Right ventricle myocardium inferior (tissue), 1 donor: ENCODE measurements at regions of chr3 and their contacts with region 1.

Region 1: GRCh38 chr3:133927540-133928066 is 31.9 kb upstream of the RAB6B start:
- DNase-seq: no peak
- ATAC-seq: peak; percentile 87

Region 2: GRCh38 chr3:133610031-133610430 is 317.6 kb before region 1 on chr3:
- intact Hi-C with region 1: no loop called
- DNase-seq: no peak
- ATAC-seq: no peak

Region 3: GRCh38 chr3:133661454-133662277 is 265.9 kb before region 1 on chr3 and contains the start of gene TOPBP1:
- intact Hi-C with region 1: loop called (anchors 5 kb)
- DNase-seq: peak; percentile 93
- ATAC-seq: peak; percentile 86
- total RNA-seq, gene TOPBP1: 10.5 TPM

Region 4: DNA sequence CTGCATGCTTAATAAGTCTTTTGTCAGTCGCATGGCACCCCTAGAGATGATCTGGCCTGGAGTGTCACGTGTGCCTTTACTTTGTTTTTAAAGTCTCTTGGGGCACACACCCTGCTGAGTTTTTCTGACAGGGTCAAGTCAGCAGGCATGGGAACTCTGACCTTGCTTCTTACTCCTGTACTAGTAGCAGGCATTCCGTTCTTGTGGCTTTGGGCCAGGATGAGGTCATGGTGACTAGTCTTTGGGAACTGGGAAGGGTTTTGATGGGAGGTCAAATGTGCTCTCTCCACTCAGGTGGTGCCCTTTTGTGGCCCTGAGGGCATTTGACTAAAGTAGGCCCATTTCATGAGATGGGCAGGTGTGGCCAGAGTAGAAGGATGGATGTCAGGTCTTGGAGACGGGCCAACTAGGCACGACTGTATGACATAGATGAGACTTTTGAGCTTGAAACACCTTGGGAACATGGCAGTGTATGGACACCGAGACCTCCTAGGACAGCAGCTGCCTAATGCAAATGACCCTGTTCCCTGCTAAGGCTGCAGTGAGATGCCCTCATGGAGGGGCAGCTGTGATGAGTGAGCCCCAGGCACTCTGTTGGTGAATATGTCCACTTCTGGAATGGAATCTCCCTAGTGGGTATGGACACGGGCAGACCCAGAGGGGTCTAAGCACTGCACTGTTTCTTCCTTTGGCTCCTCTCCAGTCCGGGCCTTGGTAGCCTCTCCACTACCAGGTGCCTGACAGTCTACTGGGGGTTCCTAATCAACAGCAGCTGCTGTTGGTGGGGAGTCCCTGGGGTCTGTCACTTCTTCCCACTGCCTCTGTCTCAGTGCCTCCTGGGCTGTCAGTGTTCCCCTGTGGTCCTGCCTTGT is 105.6 kb before region 1 on chr3:
- intact Hi-C with region 1: loop called (anchors 1 kb)
- DNase-seq: no peak
- ATAC-seq: peak; percentile 65

Region 5: GRCh38 chr3:134145177-134145576 is 217.6 kb after region 1 on chr3:
- intact Hi-C with region 1: loop called (anchors 10 kb)
- DNase-seq: no peak
- ATAC-seq: no peak

Region 6: DNA sequence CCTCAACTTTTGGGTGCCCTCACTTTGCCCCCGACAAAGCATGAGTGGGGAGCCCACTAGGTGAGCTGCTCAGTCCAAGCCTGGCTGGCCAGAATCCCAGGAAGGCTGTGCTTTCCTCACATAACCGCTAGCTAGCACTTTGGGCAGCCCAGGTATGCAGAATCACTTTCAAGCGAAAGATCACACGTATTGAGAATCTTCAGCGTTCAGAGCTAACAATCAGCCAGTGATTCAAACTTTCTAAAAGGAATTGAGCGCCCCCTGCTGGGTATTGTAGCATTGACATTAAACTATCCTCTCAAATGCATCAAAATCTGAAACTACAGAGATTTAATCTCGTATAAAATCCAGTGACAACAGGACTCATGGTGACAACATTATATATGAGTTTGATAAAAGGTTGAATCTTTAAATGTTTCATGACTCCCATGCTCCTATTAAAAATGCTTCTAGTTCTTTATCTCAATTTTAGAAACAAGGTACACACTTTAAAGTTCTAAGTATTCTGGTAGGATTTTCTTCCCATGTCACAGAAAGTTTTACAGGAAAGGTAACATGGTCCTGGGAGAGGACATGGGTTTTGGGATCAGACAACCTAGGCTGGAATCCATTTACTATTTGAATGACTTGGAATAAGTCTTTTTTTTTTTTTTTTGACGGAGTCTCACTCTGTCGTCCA is 546.4 kb after region 1 on chr3:
- intact Hi-C with region 1: loop called (anchors 10 kb)
- DNase-seq: peak; percentile 45
- ATAC-seq: peak; percentile 33